Activated CD4-positive, alpha-beta memory T cell treated with anti-CD3 and anti-CD28 coated beads, Interleukin-2, amount 10 ng/mL, durations not matched to agents 7 days and 5 days (primary cell): ENCODE measurements at regions of chr16 and their contacts with region 1.

Region 1: GRCh38 chr16:9008601-9009260 is 45.0 kb upstream of the USP7 start:
- DNase-seq: peak; percentile 73
- H3K4me3 Mint-ChIP-seq: no peak overlapping the region
- H3K27ac Mint-ChIP-seq: no peak overlapping the region
- H3K4me1 Mint-ChIP-seq: peaks cover 4% of the 10 kb centered on the region
- H3K27me3 Mint-ChIP-seq: peaks cover 14% of the 10 kb centered on the region

Region 2: DNA sequence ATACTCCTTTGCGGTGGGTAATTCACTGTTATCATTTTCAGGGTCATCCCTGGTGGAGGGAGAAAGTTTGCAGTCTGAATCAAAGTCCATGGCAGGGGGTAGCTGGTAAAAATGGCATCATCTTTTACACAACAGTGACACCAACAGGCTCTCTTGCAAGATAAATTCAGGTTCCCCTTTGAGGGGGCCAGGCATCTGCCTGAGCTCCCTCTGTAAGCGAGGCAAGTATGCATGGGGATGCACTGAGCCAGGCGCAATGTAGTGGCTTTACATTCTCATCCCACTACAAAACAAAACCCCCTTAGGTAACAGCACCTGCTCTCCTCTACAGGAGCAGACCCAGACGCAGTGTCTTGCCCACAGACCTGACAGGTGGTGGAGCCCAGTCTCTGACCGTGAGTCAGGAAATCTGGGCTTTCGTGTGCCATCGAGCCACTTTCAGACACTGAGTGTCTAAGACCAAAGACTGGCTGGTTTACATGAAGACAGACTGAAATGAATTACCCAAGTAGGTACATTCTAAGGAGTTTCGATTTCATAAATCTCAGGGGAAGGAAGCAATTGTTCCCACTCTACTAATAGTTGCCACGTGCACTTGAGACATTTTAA is 108.9 kb before region 1 on chr16:
- CTCF ChIA-PET with region 1: interaction called, 18 read pairs
- POLR2A ChIA-PET with region 1: no interaction called
- DNase-seq: no peak
- H3K4me3 Mint-ChIP-seq: no peak overlapping the region
- H3K27ac Mint-ChIP-seq: no peak overlapping the region
- H3K4me1 Mint-ChIP-seq: no peaks in the 10 kb centered on the region
- H3K27me3 Mint-ChIP-seq: no peaks in the 10 kb centered on the region

Region 3: DNA sequence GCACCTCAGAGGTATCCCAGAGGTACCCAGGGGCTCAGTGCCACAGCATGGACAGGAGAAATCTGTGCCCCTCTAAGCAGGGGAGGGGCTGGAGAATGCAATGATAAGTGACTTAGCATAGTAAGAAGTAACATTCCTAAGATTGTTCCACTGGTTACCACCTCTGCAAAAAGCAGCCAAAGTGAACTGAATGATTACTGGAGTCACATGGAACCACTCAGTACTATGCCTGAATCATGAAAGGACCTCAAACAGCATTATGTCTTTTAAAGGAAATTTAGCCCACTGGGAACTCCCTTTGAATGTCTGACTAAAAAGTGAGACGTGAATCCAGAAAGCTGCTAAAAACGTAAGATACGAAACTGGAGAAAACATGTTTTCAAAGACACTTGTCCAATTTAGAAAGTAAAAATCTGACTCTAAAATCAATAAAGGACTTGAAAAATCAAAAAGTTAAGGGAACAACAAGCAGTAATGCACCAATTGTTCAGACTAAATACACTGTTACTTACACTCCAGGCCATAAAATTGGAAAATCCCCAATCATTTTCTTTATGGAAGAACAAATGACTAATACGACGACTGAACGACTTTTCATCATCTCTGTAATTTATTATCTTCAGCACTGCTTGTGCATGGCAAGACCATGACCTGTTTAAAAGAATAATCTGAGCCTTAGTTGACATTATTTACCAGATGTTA is 87.9 kb before region 1 on chr16:
- CTCF ChIA-PET with region 1: interaction called, 12 read pairs
- POLR2A ChIA-PET with region 1: interaction called, 3 read pairs
- DNase-seq: no peak
- H3K4me3 Mint-ChIP-seq: no peak overlapping the region
- H3K27ac Mint-ChIP-seq: peak overlapping the region; percentile 81
- H3K4me1 Mint-ChIP-seq: peaks cover 90% of the 10 kb centered on the region
- H3K27me3 Mint-ChIP-seq: no peaks in the 10 kb centered on the region

Region 4: GRCh38 chr16:8936421-8936820 is 72.3 kb before region 1 on chr16:
- CTCF ChIA-PET with region 1: interaction called, 21 read pairs
- POLR2A ChIA-PET with region 1: no interaction called
- DNase-seq: peak; percentile 81
- H3K4me3 Mint-ChIP-seq: no peak overlapping the region
- H3K27ac Mint-ChIP-seq: peak overlapping the region; percentile 1
- H3K4me1 Mint-ChIP-seq: peaks cover 49% of the 10 kb centered on the region
- H3K27me3 Mint-ChIP-seq: no peaks in the 10 kb centered on the region

Region 5: DNA sequence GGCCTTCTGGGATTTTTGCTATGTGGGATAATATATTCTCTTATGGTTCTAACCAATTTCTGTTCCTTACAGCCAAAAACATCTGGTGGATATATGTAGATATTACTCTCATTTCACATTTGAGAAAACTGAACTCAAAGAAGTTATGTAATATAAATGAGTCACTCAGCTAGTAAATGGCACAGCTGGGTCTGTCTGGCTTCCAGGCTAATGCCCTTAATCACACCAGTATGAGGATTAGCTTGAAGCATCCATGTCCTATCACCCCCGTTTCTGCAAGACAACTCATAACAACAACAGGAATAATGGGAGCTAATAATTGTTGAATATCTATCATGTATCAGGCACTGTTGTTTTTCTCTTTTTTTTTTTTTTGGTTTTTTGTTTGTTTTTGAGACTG is 10.6 kb before region 1 on chr16:
- CTCF ChIA-PET with region 1: interaction called, 17 read pairs
- POLR2A ChIA-PET with region 1: no interaction called
- DNase-seq: no peak
- H3K4me3 Mint-ChIP-seq: no peak overlapping the region
- H3K27ac Mint-ChIP-seq: no peak overlapping the region
- H3K4me1 Mint-ChIP-seq: peaks cover 2% of the 10 kb centered on the region
- H3K27me3 Mint-ChIP-seq: no peaks in the 10 kb centered on the region

Region 6: GRCh38 chr16:9033125-9033830 is 24.5 kb after region 1 on chr16:
- CTCF ChIA-PET with region 1: interaction called, 10 read pairs
- POLR2A ChIA-PET with region 1: no interaction called
- DNase-seq: no peak
- H3K4me3 Mint-ChIP-seq: no peak overlapping the region
- H3K27ac Mint-ChIP-seq: no peak overlapping the region
- H3K4me1 Mint-ChIP-seq: no peaks in the 10 kb centered on the region
- H3K27me3 Mint-ChIP-seq: no peaks in the 10 kb centered on the region

Region 7: DNA sequence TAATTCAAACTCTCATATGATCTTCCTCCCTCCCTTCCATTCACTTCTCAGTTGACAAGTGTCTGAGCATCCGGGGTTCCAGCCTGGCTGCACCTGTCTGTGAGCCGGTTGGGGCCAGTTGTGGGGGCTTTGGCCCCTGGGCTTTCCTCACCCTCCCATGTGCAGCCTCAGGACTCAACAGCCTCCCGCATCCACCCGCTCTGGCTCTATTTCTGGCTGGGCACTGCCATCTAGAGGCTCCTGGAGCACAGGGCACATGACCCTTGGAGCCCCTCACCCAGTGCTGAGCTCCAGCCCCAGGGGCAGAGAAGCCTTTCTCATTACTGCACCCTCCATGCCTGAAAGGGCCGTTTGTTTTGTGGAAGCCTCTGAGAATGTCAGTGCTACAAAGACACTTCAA is 126.0 kb after region 1 on chr16:
- CTCF ChIA-PET with region 1: interaction called, 17 read pairs
- POLR2A ChIA-PET with region 1: no interaction called
- DNase-seq: peak; percentile 65
- H3K4me3 Mint-ChIP-seq: no peak overlapping the region
- H3K27ac Mint-ChIP-seq: no peak overlapping the region
- H3K4me1 Mint-ChIP-seq: peaks cover 33% of the 10 kb centered on the region
- H3K27me3 Mint-ChIP-seq: peaks cover 10% of the 10 kb centered on the region